CD14-positive monocyte (primary cell): ENCODE measurements at regions of chr1 and their contacts with region 1.

Region 1: DNA sequence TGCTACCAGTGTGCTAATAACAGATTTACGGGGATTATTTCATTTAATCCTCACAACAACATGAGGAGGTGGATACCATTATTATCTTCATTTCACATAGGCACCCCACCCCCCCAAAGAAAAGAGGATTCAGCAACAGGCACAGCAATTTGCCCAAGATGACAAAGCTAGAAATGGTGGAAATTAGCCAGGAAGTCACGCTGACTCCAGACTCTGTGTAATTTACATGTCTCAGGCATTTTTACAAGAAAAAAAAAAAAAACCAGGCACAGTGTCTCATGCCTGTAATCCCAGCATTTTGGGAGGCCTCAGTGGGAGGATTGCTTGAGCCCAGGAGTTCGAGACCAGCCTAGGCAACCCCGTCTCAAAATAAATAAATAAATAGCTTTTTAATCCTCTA is 37.5 kb upstream of the PRDM2 start:
- DNase-seq: peak; percentile 32 to 66 (median 60)
- H3K4me3 ChIP-seq: peak overlapping the region in 1 of 3 experiments; percentile 50
- H3K4me3 Mint-ChIP-seq: peak overlapping the region in 1 of 2 donors; percentile 85
- H3K27ac ChIP-seq: no peak overlapping the region
- H3K27ac Mint-ChIP-seq: peak overlapping the region in 3 of 7 donors; percentile 11 to 65 (median 33)
- H3K4me1 ChIP-seq: peaks cover 41 to 42% of the 10 kb centered on the region in 2 donors
- H3K4me1 Mint-ChIP-seq: peaks cover 42% of the 10 kb centered on the region
- H3K27me3 ChIP-seq: no peaks in the 10 kb centered on the region
- H3K27me3 Mint-ChIP-seq: peaks cover 0 to 1% (median 0%) of the 10 kb centered on the region in 3 donors
- CTCF ChIP-seq: no peak

Region 2: DNA sequence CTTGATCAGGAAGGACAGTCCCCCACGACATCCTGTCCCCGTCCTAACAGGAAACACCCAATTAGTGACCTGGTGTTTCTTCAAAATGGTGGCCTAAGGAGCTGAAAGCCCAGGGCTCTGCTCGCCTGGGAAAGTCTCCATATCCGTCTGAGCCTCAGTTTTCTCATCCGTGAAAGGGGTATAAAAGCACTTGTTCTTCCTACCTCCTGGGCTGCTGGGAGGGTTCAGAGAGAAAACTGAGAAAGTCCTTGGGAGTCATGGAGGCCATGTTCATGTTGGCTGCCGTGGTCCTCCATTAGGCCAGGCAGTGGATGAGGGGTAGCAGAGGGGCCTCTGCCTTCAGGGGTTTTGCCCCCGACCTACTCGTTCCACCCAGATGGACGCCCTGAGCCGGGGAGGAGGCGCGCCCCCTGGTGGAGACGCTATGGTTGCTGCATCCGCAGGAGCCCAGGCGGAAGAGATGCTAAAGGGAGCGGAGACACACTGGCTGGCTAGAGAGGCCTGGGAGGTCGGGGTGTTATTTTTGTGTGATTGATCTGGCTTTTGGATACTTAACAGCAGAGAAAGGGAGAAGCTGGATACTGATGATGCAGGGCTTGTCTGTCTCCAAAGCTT is 151.0 kb after region 1 on chr1:
- intact Hi-C with region 1: loop called (anchors 2 kb)
- DNase-seq: peak; percentile 23 to 43 (median 24)
- H3K4me3 ChIP-seq: no peak overlapping the region
- H3K4me3 Mint-ChIP-seq: no peak overlapping the region
- H3K27ac ChIP-seq: no peak overlapping the region
- H3K27ac Mint-ChIP-seq: no peak overlapping the region
- H3K4me1 ChIP-seq: no peaks in the 10 kb centered on the region
- H3K4me1 Mint-ChIP-seq: peaks cover 6% of the 10 kb centered on the region
- H3K27me3 ChIP-seq: no peaks in the 10 kb centered on the region
- H3K27me3 Mint-ChIP-seq: peaks cover 0 to 2% (median 0%) of the 10 kb centered on the region in 3 donors
- CTCF ChIP-seq: peak; percentile 79

Region 3: DNA sequence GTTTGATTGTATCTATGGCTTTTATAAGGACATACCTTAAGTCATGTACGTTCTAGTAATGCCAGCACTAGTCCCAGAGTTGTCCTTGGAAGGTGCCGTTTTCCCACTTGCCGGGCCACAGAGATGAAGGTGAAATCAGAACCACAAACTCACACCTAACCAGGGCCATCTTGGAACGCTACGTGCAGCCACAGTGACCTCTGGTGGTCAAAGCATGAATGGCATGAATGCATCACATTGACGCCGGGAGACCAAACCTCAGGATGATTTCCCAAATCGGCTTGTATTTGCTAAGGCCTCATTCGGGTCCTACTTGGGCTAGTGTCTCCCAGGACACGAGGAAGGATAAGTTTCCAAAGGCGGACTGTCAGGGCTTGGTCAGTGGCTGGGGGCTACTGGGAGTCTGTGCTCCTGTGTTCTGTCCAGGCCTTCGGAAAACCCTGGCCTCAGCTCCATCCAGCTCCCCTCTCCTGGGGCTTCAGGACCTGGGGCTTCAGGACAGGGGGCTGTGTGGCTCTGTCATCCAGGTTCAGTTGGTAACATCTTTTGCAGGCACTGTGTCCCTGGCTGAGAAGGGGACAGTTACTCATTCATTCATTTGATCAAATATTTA is 298.0 kb after region 1 on chr1:
- intact Hi-C with region 1: loop called (anchors 2 to 5 kb)
- DNase-seq: peak; percentile 18 to 34 (median 31)
- H3K4me3 ChIP-seq: no peak overlapping the region
- H3K4me3 Mint-ChIP-seq: no peak overlapping the region
- H3K27ac ChIP-seq: no peak overlapping the region
- H3K27ac Mint-ChIP-seq: no peak overlapping the region
- H3K4me1 ChIP-seq: no peaks in the 10 kb centered on the region
- H3K4me1 Mint-ChIP-seq: no peaks in the 10 kb centered on the region
- H3K27me3 ChIP-seq: no peaks in the 10 kb centered on the region
- H3K27me3 Mint-ChIP-seq: peaks cover 0 to 13% (median 13%) of the 10 kb centered on the region in 3 donors
- CTCF ChIP-seq: peak; percentile 97